ENCODE measurements at regions of chr10 and their contacts with region 1.

Region 1: DNA sequence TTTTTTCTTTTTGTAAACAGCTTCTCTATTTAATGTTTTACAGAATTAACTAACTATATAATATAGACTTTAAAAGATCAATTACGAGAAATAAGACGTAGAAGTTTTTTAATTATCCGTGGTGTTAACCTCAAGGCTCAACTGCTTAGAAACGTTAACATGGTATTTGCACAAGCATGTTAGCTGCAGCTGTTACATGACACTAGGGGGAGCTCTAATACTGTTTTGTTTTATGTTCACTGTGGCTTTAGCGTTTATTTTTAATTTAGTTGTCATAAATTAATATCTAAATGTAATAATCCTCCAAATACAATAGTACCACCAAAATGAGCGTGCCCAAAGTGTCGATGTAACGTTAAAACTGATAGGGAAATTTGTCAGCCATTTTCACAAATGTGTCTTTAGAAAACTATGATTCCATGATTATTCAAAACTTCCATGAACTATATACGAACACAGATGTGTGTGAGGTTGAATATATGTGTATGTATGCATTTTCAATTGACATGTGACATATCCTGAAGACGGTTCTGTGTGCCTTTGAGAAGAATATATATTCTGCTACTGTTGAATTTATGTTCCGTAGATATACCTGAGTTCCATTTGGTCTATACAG is 828.8 kb upstream of the MBL2 start:
- DNase-seq: peak; percentile 53
- H3K4me3 Mint-ChIP-seq: no peak overlapping the region
- H3K27ac Mint-ChIP-seq: peak overlapping the region; percentile 23
- H3K4me1 Mint-ChIP-seq: peaks cover 9% of the 10 kb centered on the region
- H3K27me3 Mint-ChIP-seq: no peaks in the 10 kb centered on the region
- CTCF ChIP-seq: peak; percentile 74

Region 2: GRCh38 chr10:52883996-52884871 is 717.1 kb before region 1 on chr10:
- CTCF ChIA-PET with region 1: interaction called, 3 read pairs
- POLR2A ChIA-PET with region 1: no interaction called
- intact Hi-C with region 1: loop called (anchors 1 kb)
- DNase-seq: peak; percentile 98
- H3K4me3 Mint-ChIP-seq: peak overlapping the region; percentile 65
- H3K27ac Mint-ChIP-seq: peak overlapping the region; percentile 85
- H3K4me1 Mint-ChIP-seq: peaks cover 30% of the 10 kb centered on the region
- H3K27me3 Mint-ChIP-seq: no peaks in the 10 kb centered on the region
- CTCF ChIP-seq: peak; percentile 93

Region 3: DNA sequence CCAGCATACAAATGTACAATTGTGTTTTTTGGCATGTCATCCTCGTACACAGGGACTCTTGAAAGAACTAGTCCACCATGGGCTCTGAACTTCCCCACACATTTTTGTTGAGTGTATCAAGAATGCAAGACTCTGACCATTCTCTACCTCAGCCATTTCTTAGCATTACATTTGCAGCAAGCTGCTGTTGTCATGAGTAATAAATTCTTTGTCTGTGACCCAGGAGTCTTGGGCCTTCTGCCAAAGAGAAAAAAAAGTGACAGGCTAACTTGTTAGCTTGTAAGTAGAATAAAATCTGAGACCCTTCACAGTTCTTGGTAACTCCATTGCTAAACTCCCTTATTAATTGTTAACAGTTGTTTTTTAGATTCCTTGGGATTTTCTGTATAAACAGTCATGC is 286.5 kb before region 1 on chr10:
- CTCF ChIA-PET with region 1: no interaction called
- POLR2A ChIA-PET with region 1: no interaction called
- intact Hi-C with region 1: loop called (anchors 2 kb)
- DNase-seq: peak; percentile 86
- H3K4me3 Mint-ChIP-seq: no peak overlapping the region
- H3K27ac Mint-ChIP-seq: peak overlapping the region; percentile 16
- H3K4me1 Mint-ChIP-seq: peaks cover 6% of the 10 kb centered on the region
- H3K27me3 Mint-ChIP-seq: no peaks in the 10 kb centered on the region
- CTCF ChIP-seq: no peak

Region 4: DNA sequence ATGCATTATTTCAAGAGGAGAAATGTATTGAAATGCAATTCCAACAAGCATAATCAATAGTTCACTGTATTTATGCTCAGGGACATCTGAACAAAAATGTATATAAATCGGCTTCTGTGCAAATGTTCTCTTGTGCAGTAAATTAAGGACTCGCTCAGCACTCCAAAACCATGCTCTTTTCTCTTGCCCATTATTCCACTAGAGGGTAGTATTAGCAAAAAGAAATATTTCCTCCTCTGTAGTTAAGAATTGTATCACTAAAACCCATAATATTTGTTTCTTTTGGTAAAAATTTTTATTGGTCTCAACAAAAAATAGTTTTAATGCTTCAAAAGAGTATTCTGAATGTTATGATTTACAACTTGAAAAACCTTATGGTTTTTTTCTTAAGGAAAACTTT is 396.6 kb after region 1 on chr10:
- CTCF ChIA-PET with region 1: interaction called, 4 read pairs
- POLR2A ChIA-PET with region 1: no interaction called
- intact Hi-C with region 1: loop called (anchors 5 kb)
- DNase-seq: peak; percentile 26
- H3K4me3 Mint-ChIP-seq: no peak overlapping the region
- H3K27ac Mint-ChIP-seq: no peak overlapping the region
- H3K4me1 Mint-ChIP-seq: no peaks in the 10 kb centered on the region
- H3K27me3 Mint-ChIP-seq: no peaks in the 10 kb centered on the region
- CTCF ChIP-seq: peak; percentile 41

Region 5: DNA sequence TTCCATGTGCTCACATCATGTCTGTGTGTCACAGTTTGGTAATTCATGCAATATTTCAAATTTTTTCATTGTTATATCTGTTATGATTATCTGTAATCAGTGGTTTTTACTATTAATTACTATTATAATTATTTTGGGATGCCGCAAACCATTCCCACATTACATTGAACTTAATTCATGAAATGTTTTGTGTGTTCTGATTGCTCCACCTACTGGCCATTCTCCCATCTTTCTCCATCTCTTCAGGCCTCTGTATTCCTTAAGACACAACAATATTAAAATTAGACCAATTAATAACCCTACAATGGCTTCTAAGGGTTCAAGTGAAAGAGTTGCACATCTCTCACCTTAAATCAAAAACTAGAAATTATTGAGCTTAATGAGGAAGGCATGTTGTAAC is 801.2 kb after region 1 on chr10:
- CTCF ChIA-PET with region 1: interaction called, 4 read pairs
- POLR2A ChIA-PET with region 1: no interaction called
- intact Hi-C with region 1: loop called (anchors 1 kb)
- DNase-seq: peak; percentile 59
- H3K4me3 Mint-ChIP-seq: no peak overlapping the region
- H3K27ac Mint-ChIP-seq: no peak overlapping the region
- H3K4me1 Mint-ChIP-seq: no peaks in the 10 kb centered on the region
- H3K27me3 Mint-ChIP-seq: no peaks in the 10 kb centered on the region
- CTCF ChIP-seq: peak; percentile 62